ENCODE measurements at regions of chr14 and their contacts with region 1.

Region 1: GRCh38 chr14:75002392-75003249 is at the start of gene EIF2B2:
- DNase-seq: peak; percentile 97 to 100
- H3K4me3 ChIP-seq: peak within 1 kb of the TSS; percentile 79
- H3K27ac ChIP-seq: 0 out of 2 replicates have a peak within 1 kb of the TSS, but pooled peaks have one; percentile 10
- H3K4me1 ChIP-seq: peaks cover 24% of the 10 kb centered on the region
- H3K27me3 ChIP-seq: no peaks in the 10 kb centered on the region
- CTCF ChIP-seq: peak; percentile 22; the same call in 1 of the 2 replicates
- total RNA-seq, gene EIF2B2: 131 and 139 TPM in 2 replicates

Region 2: GRCh38 chr14:74834682-74835392 is 167.8 kb before region 1 on chr14:
- CTCF ChIA-PET with region 1: no interaction called
- POLR2A ChIA-PET with region 1: no interaction called
- intact Hi-C with region 1: no loop called
- DNase-seq: no peak
- H3K4me3 ChIP-seq: no peak overlapping the region
- H3K27ac ChIP-seq: no peak overlapping the region
- H3K4me1 ChIP-seq: no peaks in the 10 kb centered on the region
- H3K27me3 ChIP-seq: no peaks in the 10 kb centered on the region
- CTCF ChIP-seq: no peak

Region 3: GRCh38 chr14:74955229-74956026 is 47.2 kb before region 1 on chr14 and contains the start of gene PGF:
- CTCF ChIA-PET with region 1: interaction called, 4 read pairs
- POLR2A ChIA-PET with region 1: interaction called, 4 read pairs
- intact Hi-C with region 1: loop called (anchors 2 kb)
- DNase-seq: peak; percentile 49 to 86
- H3K4me3 ChIP-seq: peak within 1 kb of the TSS; percentile 66
- H3K27ac ChIP-seq: no peak within 1 kb of the TSS
- H3K4me1 ChIP-seq: peaks cover 19% of the 10 kb centered on the region
- H3K27me3 ChIP-seq: peaks cover 5% of the 10 kb centered on the region; the same call in 1 of the 2 replicates
- CTCF ChIP-seq: no peak
- total RNA-seq, gene PGF: 8.9 and 11.7 TPM in 2 replicates

Region 4: DNA sequence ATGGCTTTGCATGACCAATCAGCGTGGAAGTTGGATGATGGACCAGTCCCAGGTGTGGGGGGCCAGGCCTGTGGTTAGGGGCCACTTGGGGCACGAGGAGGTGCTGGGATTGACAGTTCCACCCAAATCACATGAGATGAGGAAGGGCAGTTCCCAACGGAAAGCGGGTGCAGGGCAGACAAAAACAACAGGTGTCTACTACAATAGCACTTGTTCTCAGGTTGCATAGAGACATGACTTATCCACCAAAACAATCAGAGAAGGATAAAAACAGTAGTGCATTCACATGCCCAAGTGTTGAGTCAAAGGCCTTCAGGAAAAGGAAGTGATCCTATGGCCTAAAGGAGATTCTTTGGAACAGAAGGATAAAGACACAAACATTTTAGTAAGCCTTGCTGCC is 14.5 kb before region 1 on chr14:
- CTCF ChIA-PET with region 1: no interaction called
- POLR2A ChIA-PET with region 1: interaction called, 6 read pairs
- intact Hi-C with region 1: loop called (anchors 1 kb)
- DNase-seq: peak; percentile 94 to 100
- H3K4me3 ChIP-seq: no peak overlapping the region
- H3K27ac ChIP-seq: peak overlapping the region; percentile 38
- H3K4me1 ChIP-seq: peaks cover 43% of the 10 kb centered on the region
- H3K27me3 ChIP-seq: no peaks in the 10 kb centered on the region
- CTCF ChIP-seq: no peak; the same call in 1 of the 2 replicates

Region 5: DNA sequence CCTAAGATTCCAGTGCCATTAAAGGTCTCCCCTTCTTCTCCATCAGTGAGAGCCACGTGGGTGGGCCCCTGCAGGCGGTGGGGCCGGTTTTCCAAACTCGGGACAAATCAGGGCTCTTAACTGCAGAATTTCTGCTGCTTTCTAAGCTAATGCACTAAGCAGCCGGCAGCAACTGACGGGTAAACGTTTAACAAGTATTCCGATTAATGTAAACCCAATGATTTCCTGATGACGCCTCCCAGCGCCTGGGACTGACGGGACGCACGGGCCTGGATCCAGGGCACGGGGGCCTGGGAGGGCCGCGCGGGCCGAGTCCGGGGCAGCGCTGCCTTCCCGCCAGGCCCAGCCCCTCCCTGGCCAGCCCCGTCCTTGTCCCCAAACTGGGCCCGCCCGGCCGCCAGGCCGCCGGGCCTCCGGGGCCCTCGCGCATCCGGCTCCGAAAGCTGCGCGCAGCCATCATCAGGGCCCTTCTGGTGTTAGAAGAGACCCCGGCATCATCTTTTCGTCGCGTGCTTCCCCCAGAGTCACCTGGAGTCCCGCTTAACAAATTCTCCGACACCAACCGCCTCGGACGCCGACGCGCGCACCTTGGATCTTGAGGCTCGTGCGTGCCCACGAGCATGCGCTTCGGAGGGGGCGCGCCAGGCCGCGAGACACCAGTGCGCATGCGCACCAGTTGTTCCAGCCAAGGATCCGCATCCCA is 48.4 kb after region 1 on chr14 and contains the start of gene MLH3:
- CTCF ChIA-PET with region 1: no interaction called
- POLR2A ChIA-PET with region 1: no interaction called
- intact Hi-C with region 1: loop called (anchors 2 kb)
- DNase-seq: peak; percentile 79 to 93
- H3K4me3 ChIP-seq: peak within 1 kb of the TSS; percentile 82
- H3K27ac ChIP-seq: peak within 1 kb of the TSS; percentile 61
- H3K4me1 ChIP-seq: peaks cover 15% of the 10 kb centered on the region
- H3K27me3 ChIP-seq: no peaks in the 10 kb centered on the region
- CTCF ChIP-seq: 0 out of 2 replicates have a peak, but pooled peaks have one; percentile 5
- total RNA-seq, gene MLH3: 47.6 and 48.7 TPM in 2 replicates

Region 6: GRCh38 chr14:75069045-75069810 is 66.6 kb after region 1 on chr14 and contains the start of gene ZC2HC1C:
- CTCF ChIA-PET with region 1: interaction called, 3 read pairs
- POLR2A ChIA-PET with region 1: interaction called, 4 read pairs
- intact Hi-C with region 1: loop called (anchors 1 kb)
- DNase-seq: peak; percentile 94 to 100
- H3K4me3 ChIP-seq: peak within 1 kb of the TSS; percentile 71
- H3K27ac ChIP-seq: peak within 1 kb of the TSS; percentile 79
- H3K4me1 ChIP-seq: peaks cover 32% of the 10 kb centered on the region
- H3K27me3 ChIP-seq: no peaks in the 10 kb centered on the region
- CTCF ChIP-seq: no peak
- total RNA-seq, gene ZC2HC1C: 11.9 and 13.8 TPM in 2 replicates

Region 7: DNA sequence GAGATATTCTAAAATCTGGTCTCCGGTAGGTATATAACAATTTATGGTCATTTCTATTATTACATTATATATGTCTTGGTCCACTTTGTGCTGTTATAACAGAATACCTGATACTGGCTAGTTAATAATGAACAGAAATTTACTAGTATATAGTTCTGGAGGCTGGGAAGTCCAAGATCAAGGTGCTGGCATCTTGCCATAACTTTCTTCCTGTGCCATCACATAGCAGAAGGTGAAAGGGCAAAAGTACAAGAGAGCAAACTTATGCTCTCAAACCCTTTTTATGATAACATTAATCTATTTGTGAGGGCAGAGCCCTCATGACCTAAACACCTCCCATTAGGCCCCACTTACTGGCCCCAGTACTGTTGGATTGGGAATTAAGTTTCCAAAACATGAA is 501.8 kb after region 1 on chr14:
- CTCF ChIA-PET with region 1: no interaction called
- POLR2A ChIA-PET with region 1: no interaction called
- intact Hi-C with region 1: no loop called
- DNase-seq: no peak
- H3K4me3 ChIP-seq: no peak overlapping the region
- H3K27ac ChIP-seq: no peak overlapping the region
- H3K4me1 ChIP-seq: no peaks in the 10 kb centered on the region
- H3K27me3 ChIP-seq: no peaks in the 10 kb centered on the region
- CTCF ChIP-seq: no peak